ENCODE measurements at regions of chrX and their contacts with region 1.

Region 1: GRCh38 chrX:132615391-132616131 is 126.7 kb upstream of the MBNL3 start:
- DNase-seq: peak; percentile 34
- ATAC-seq: peak in 1 of 2 donors; percentile 32

Region 2: GRCh38 chrX:132092439-132093065 is 523.0 kb before region 1 on chrX:
- intact Hi-C with region 1: loop called in 1 of 2 experiments (anchors 10 kb)
- DNase-seq: peak; percentile 43
- ATAC-seq: peak; percentile 56 to 89

Region 3: DNA sequence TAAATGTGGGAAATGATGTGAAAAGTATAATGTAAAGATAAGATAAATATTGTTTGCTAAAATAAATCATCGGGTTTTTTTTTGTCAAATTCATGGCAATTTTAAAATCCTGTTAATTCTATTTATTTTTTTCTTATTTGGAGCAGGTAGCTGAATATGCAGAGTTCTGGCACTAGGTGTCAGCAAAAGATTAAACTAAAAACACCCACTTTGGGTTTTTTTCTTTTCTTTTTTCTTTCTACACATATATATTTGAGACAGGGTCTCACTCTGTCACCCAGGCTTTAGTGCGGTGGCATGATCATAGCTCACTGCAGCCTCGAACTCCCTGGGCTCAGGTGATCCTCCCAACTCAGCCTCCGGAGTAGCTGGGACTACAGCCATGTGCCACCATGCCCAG is 389.4 kb before region 1 on chrX:
- intact Hi-C with region 1: loop called in 1 of 2 experiments (anchors 10 kb)
- DNase-seq: no peak
- ATAC-seq: no peak

Region 4: GRCh38 chrX:132292793-132293192 is 322.8 kb before region 1 on chrX:
- intact Hi-C with region 1: loop called (anchors 5 kb)
- DNase-seq: no peak
- ATAC-seq: peak; percentile 62 to 73